ENCODE measurements at regions of chr2 and their contacts with region 1.

Region 1: GRCh38 chr2:44167940-44168680 is 565 bp upstream of the PPM1B start:
- DNase-seq: peak; percentile 99 to 100 (median 100)
- H3K4me3 ChIP-seq: peak overlapping the region; percentile 37 to 83 (median 62)
- H3K4me3 Mint-ChIP-seq: peak overlapping the region; percentile 90 to 100
- H3K27ac ChIP-seq: peak overlapping the region; percentile 96 to 99
- H3K27ac Mint-ChIP-seq: peak overlapping the region; percentile 98 to 99 (median 99)
- H3K4me1 ChIP-seq: peaks cover 18 to 52% of the 10 kb centered on the region in 2 donors
- H3K4me1 Mint-ChIP-seq: peaks cover 39% of the 10 kb centered on the region
- H3K27me3 ChIP-seq: no peaks in the 10 kb centered on the region
- H3K27me3 Mint-ChIP-seq: no peaks in the 10 kb centered on the region
- CTCF ChIP-seq: no peak

Region 2: DNA sequence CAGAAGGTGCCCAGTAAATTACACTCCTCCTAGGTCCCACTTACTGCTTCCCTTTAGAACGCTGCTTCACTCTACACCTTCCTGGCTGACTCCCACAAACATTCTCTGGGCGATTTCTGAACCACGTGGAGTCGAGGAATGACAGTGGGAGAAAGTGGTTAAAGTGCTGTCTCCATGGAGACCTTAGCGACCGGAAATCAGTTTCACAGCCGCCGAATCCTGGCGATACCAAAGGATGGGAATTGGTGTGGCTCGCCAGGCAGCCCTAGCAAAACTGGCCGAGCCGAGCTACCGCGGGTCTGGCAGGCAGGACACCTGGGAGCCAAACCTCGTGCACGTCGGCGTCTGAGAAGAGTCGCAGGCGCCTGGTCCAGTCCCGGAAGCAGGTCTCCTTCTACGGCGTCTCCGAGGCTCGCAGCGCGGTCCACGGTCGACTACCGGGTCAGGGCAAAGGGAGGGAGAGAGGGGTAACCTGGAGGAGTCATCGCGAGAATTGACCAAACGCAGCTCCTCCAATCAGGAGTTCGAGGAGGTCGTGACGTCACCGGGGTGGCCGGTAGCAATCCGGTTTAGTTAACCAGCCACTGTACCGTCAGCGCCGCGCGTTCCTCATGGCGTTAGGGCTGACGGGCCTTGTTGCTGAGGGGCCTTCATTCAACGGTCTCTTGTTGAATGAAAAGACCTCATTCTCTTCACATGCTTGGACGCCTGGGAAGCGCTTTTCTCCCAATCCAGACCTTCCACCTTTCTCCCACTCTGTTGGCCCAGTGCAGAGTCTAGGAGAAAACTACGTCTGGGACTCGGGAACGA is 572.3 kb before region 1 on chr2 and contains the start of gene THADA:
- intact Hi-C with region 1: loop called in 1 of 2 experiments (anchors 10 kb)
- DNase-seq: peak; percentile 98 to 99 (median 98)
- H3K4me3 ChIP-seq: peak within 1 kb of the TSS; percentile 78 to 98 (median 91)
- H3K4me3 Mint-ChIP-seq: peak within 1 kb of the TSS; percentile 92 to 95
- H3K27ac ChIP-seq: peak within 1 kb of the TSS; percentile 78 to 96
- H3K27ac Mint-ChIP-seq: peak within 1 kb of the TSS; percentile 93 to 98 (median 97)
- H3K4me1 ChIP-seq: peaks cover 16 to 22% of the 10 kb centered on the region in 2 donors
- H3K4me1 Mint-ChIP-seq: peaks cover 21% of the 10 kb centered on the region
- H3K27me3 ChIP-seq: no peaks in the 10 kb centered on the region
- H3K27me3 Mint-ChIP-seq: peaks cover 2 to 8% (median 3%) of the 10 kb centered on the region in 3 donors
- CTCF ChIP-seq: no peak
- polyA plus RNA-seq, gene THADA: 7.3 to 11.2 (median 9.7) TPM

Region 3: GRCh38 chr2:43995733-43996533 is 172.2 kb before region 1 on chr2 and contains the start of gene LRPPRC:
- intact Hi-C with region 1: loop called (anchors 5 to 10 kb)
- DNase-seq: peak; percentile 87 to 90 (median 87)
- H3K4me3 ChIP-seq: peak within 1 kb of the TSS; percentile 63 to 90 (median 81)
- H3K4me3 Mint-ChIP-seq: peak within 1 kb of the TSS; percentile 91 to 96
- H3K27ac ChIP-seq: peak within 1 kb of the TSS; percentile 63 to 90
- H3K27ac Mint-ChIP-seq: peak within 1 kb of the TSS; percentile 97 to 99 (median 99)
- H3K4me1 ChIP-seq: peaks cover 10 to 21% of the 10 kb centered on the region in 2 donors
- H3K4me1 Mint-ChIP-seq: peaks cover 25% of the 10 kb centered on the region
- H3K27me3 ChIP-seq: no peaks in the 10 kb centered on the region
- H3K27me3 Mint-ChIP-seq: peaks cover 1 to 6% (median 6%) of the 10 kb centered on the region in 3 donors
- CTCF ChIP-seq: no peak
- polyA plus RNA-seq, gene LRPPRC: 15.5 to 25.0 (median 24.8) TPM

Region 4: DNA sequence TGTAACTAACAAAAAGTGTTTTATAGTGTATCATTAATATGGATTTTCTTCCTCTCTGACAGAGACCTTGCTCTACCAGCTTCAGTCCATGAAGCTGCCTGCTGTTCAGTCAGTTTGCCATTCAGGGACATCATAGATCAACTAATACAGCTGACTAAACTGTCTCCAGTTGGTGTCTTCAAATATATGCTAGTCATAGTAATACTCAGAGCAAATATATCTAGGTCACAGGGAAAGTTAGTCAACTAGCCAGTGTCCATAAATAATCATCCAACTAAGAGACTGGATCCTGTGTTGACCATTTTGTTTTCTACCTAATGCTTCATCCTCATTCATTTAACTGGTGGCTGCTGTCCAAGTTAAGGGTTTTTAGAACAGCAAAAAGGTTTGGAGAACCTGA is 134.2 kb before region 1 on chr2:
- intact Hi-C with region 1: no loop called
- DNase-seq: no peak
- H3K4me3 ChIP-seq: no peak overlapping the region
- H3K4me3 Mint-ChIP-seq: no peak overlapping the region
- H3K27ac ChIP-seq: no peak overlapping the region
- H3K27ac Mint-ChIP-seq: peak overlapping the region in 1 of 7 donors; percentile 21
- H3K4me1 ChIP-seq: no peaks in the 10 kb centered on the region
- H3K4me1 Mint-ChIP-seq: no peaks in the 10 kb centered on the region
- H3K27me3 ChIP-seq: peaks cover 0 to 2% of the 10 kb centered on the region in 2 donors
- H3K27me3 Mint-ChIP-seq: peaks cover 0 to 13% (median 7%) of the 10 kb centered on the region in 3 donors
- CTCF ChIP-seq: no peak

Region 5: DNA sequence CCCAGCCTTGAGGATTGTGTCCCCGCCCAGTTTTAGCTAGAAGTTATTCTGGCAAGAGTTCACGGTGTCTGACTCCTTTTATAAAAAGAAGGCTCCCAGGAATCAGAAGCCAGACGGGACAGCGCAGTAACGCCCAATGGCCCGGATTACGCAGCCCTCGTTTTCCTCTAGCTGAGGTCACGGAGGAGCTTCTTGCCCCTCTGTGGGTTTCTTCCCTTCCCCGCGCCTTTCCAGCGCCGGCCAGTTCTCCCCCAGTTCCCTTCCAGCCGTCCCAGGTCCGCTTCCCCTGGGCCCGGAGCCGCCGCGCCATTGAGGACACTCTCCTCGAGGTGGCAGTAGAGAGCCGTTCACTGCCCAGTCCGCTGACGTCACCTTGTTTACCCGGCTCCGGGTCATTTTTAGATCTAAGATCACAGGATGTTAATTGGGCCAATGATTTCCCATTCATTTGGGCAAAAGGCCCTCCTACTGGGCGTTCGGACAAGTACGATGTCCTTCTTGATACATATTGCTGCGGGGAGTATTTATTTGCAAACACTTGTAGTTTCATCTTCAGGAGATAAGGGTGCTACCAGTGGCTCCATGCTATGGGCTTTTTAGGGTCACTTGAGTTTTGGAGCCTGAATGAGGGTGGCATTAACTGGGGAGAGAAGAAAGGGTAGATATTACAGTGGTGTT is 80.9 kb before region 1 on chr2:
- intact Hi-C with region 1: loop called in 1 of 2 experiments (anchors 5 kb)
- DNase-seq: peak; percentile 79 to 84 (median 83)
- H3K4me3 ChIP-seq: peak overlapping the region; percentile 22 to 75 (median 32)
- H3K4me3 Mint-ChIP-seq: peak overlapping the region; percentile 64 to 81
- H3K27ac ChIP-seq: peak overlapping the region in 1 of 2 donors; percentile 63
- H3K27ac Mint-ChIP-seq: peak overlapping the region; percentile 54 to 90 (median 77)
- H3K4me1 ChIP-seq: peaks cover 8 to 9% of the 10 kb centered on the region in 2 donors
- H3K4me1 Mint-ChIP-seq: peaks cover 27% of the 10 kb centered on the region
- H3K27me3 ChIP-seq: no peaks in the 10 kb centered on the region
- H3K27me3 Mint-ChIP-seq: peaks cover 0 to 5% (median 2%) of the 10 kb centered on the region in 3 donors
- CTCF ChIP-seq: peak; percentile 93

Region 6: GRCh38 chr2:44100351-44100750 is 67.8 kb before region 1 on chr2:
- intact Hi-C with region 1: loop called in 1 of 2 experiments (anchors 10 kb)
- DNase-seq: peak; percentile 89 to 92 (median 90)
- H3K4me3 ChIP-seq: no peak overlapping the region
- H3K4me3 Mint-ChIP-seq: peak overlapping the region; percentile 37 to 80
- H3K27ac ChIP-seq: peak overlapping the region; percentile 36 to 61
- H3K27ac Mint-ChIP-seq: peak overlapping the region; percentile 73 to 92 (median 82)
- H3K4me1 ChIP-seq: peaks cover 17 to 21% of the 10 kb centered on the region in 2 donors
- H3K4me1 Mint-ChIP-seq: peaks cover 19% of the 10 kb centered on the region
- H3K27me3 ChIP-seq: no peaks in the 10 kb centered on the region
- H3K27me3 Mint-ChIP-seq: peaks cover 0 to 2% (median 0%) of the 10 kb centered on the region in 3 donors
- CTCF ChIP-seq: no peak

Region 7: DNA sequence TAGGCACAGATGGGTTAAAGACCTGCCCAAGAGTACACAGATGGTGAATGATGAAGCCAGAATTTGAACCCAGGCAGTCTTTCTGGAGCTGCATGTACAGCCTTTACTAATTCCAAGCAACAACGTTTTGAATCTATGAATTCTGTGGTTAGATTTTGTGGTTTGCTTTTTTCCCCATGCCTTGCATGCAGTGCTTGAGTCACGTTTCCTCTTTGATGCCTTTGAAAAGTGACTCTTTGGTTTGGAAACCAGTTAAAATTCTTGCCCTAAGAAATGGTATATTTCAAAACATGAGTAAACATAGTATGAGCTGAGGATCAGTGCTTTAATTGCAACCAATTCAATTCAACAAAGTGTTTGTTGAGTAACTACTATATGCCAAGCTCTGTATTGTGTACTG is 47.7 kb before region 1 on chr2:
- intact Hi-C with region 1: loop called in 1 of 2 experiments (anchors 5 kb)
- DNase-seq: peak; percentile 81 to 94 (median 90)
- H3K4me3 ChIP-seq: peak overlapping the region in 1 of 3 experiments; percentile 28
- H3K4me3 Mint-ChIP-seq: peak overlapping the region in 1 of 2 donors; percentile 30
- H3K27ac ChIP-seq: peak overlapping the region in 1 of 2 donors; percentile 49
- H3K27ac Mint-ChIP-seq: peak overlapping the region; percentile 25 to 90 (median 81)
- H3K4me1 ChIP-seq: peaks cover 15 to 25% of the 10 kb centered on the region in 2 donors
- H3K4me1 Mint-ChIP-seq: peaks cover 30% of the 10 kb centered on the region
- H3K27me3 ChIP-seq: no peaks in the 10 kb centered on the region
- H3K27me3 Mint-ChIP-seq: peaks cover 0 to 4% (median 0%) of the 10 kb centered on the region in 3 donors
- CTCF ChIP-seq: no peak

Region 8: DNA sequence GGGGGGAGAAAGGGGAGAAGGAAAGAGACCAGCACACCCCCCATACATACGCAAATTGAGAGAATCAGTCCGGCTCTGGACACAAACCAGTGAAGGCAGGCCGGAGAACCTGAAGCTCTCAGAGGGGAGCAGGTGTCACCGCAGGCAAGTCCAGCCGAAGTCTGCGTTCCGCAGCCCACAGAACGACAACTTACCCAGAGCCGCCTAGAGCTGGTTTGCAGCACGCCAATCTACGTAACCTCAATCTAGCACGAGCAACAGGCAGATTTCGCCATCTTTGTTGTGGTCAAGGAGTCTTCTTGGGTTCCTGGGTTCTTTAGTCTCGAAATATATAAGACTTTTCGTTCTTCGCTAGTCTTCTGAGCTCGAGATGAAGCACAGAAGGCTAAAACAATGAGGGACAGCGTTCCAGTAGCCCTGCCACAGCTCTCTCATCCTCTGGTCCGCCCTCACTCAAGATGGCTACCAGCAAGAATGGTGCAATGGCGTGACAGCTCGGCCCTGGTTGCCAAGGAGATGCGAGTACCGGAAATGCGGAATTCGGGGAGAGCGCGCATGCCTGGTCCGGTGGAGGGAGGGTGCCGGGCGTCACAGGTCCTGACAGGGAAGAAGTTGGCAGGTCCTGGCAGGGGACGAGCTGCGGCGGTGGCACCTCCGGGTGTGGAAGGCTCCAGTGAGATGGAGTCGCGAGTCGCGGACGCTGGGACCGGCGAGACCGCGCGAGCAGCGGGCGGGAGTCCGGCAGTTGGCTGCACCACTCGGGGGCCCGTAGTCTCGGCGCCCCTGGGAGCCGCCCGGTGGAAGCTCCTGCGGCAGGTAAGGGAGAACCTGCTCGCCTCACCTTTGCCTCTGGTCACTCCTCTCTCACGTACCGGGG is 193.5 kb after region 1 on chr2 and contains the starts of genes CAMKMT and PREPL:
- intact Hi-C with region 1: loop called in 1 of 2 experiments (anchors 5 kb)
- DNase-seq: peak; percentile 95 to 98 (median 97)
- H3K4me3 ChIP-seq: peak within 1 kb of the TSS; percentile 89 to 94 (median 93)
- H3K4me3 Mint-ChIP-seq: peak within 1 kb of the TSS; percentile 100
- H3K27ac ChIP-seq: peak within 1 kb of the TSS; percentile 77 to 100
- H3K27ac Mint-ChIP-seq: peak within 1 kb of the TSS; percentile 99 to 100 (median 99)
- H3K4me1 ChIP-seq: peaks cover 15 to 16% of the 10 kb centered on the region in 2 donors
- H3K4me1 Mint-ChIP-seq: peaks cover 22% of the 10 kb centered on the region
- H3K27me3 ChIP-seq: no peaks in the 10 kb centered on the region
- H3K27me3 Mint-ChIP-seq: peaks cover 0 to 2% (median 0%) of the 10 kb centered on the region in 3 donors
- CTCF ChIP-seq: no peak
- polyA plus RNA-seq, gene CAMKMT: 4.7 to 7.8 (median 7.0) TPM
- polyA plus RNA-seq, gene PREPL: 2.6 to 10.8 (median 8.0) TPM

Measured in CD14-positive monocyte (primary cell).